ENCODE measurements at regions of chr14 and their contacts with region 1.

Region 1: DNA sequence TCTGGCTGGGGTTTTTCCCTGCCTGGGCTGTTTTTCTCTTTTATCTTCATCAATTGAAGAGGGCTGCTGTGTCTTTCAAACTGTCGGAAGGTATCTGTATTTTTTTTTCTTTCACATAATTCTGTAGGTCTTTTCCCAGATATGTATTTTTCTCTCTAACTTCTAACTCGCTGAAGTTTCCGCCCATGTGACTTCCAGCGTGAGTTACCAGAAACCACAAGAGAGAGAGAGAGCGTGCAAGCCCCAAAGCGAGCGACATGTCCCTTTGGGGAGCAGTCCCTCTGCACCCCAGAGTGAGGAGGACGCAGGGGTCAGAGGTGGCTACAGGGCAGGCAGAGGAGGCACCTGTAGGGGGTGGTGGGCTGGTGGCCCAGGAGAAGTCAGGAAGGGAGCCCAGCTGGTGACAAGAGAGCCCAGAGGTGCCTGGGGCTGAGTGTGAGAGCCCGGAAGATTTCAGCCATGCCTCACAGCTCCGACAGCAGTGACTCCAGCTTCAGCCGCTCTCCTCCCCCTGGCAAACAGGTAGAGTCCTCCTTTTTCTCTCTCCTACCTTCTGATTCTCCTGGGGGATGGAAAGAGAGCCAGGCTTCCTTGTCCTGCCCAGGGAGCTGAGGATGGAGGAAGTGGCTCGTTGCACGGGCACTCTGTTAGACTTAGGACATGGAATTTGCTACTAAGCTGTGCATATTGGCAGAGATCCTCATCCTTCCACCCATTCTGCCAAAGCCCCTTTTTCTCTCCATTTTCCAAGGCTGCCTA is at the start of gene BATF:
- DNase-seq: peak; percentile 92
- ATAC-seq: peak; percentile 71
- H3K4me3 Mint-ChIP-seq: peak within 1 kb of the TSS; percentile 99
- H3K27ac Mint-ChIP-seq: peak within 1 kb of the TSS; percentile 97
- H3K4me1 Mint-ChIP-seq: peaks cover 73% of the 10 kb centered on the region
- H3K27me3 Mint-ChIP-seq: no peaks in the 10 kb centered on the region
- total RNA-seq, gene BATF: 74.6 to 81.3 TPM

Region 2: GRCh38 chr14:75497191-75497590 is 25.2 kb before region 1 on chr14:
- CTCF ChIA-PET with region 1: interaction called, 141 read pairs
- DNase-seq: peak; percentile 84
- ATAC-seq: peak; percentile 73
- H3K4me3 Mint-ChIP-seq: peak overlapping the region; percentile 63
- H3K27ac Mint-ChIP-seq: peak overlapping the region; percentile 93
- H3K4me1 Mint-ChIP-seq: peaks cover 74% of the 10 kb centered on the region
- H3K27me3 Mint-ChIP-seq: no peaks in the 10 kb centered on the region

Region 3: GRCh38 chr14:75654127-75654732 is 131.8 kb after region 1 on chr14:
- CTCF ChIA-PET with region 1: interaction called, 10 read pairs
- DNase-seq: peak; percentile 86
- ATAC-seq: peak; percentile 95
- H3K4me3 Mint-ChIP-seq: no peak overlapping the region
- H3K27ac Mint-ChIP-seq: no peak overlapping the region
- H3K4me1 Mint-ChIP-seq: peaks cover 13% of the 10 kb centered on the region
- H3K27me3 Mint-ChIP-seq: no peaks in the 10 kb centered on the region

Measured in activated CD8-positive, alpha-beta memory T cell treated with anti-CD3 and anti-CD28 coated beads, Interleukin-2, amount 10 ng/mL, durations not matched to agents 7 days and 5 days (primary cell).